Cardiac septum (tissue), 1 donor: ENCODE measurements at regions of chr1 and their contacts with region 1.

Region 1: GRCh38 chr1:41626616-41627375 is 142.3 kb upstream of the EDN2 start:
- DNase-seq: no peak

Region 2: GRCh38 chr1:41678111-41678878 is 51.5 kb after region 1 on chr1:
- intact Hi-C with region 1: loop called (anchors 5 kb)
- DNase-seq: no peak

Region 3: DNA sequence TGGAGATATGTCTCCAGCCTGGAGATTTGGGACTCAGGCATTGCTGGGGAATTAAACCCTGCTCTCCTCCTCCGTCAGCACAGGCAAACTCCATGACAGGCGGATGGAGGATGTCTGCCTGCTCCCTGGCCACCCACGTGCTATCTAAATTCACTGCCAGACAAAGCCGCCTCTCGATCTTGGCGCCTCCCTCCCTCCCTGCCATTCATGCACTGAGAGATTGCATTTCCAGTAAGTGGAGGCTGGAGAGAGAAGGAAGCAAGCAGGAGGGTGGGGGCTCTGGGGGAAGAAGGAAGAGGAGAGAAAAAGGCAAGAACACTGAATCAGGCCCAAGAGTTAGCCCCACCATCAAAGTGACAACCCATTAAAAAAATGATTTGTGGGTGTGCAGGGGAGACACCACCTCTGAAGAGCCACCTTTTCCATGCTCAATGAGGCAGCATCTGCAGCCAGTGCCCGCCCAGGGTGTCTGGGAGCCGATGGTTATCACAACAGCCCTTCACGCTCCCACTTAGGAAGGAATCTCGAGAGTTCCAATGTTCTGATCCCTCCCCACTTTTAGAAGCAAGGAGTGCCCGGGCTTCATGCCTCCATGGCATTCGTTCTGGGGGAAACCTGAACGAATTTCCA is 109.0 kb after region 1 on chr1:
- intact Hi-C with region 1: no loop called
- DNase-seq: no peak

Region 4: GRCh38 chr1:41882068-41882477 is 255.3 kb after region 1 on chr1:
- intact Hi-C with region 1: no loop called
- DNase-seq: no peak